Activated CD4-positive, alpha-beta T cell treated with anti-CD3 and anti-CD28 coated beads for 36 hours (primary cell): ENCODE measurements at regions of chr1 and their contacts with region 1.

Region 1: DNA sequence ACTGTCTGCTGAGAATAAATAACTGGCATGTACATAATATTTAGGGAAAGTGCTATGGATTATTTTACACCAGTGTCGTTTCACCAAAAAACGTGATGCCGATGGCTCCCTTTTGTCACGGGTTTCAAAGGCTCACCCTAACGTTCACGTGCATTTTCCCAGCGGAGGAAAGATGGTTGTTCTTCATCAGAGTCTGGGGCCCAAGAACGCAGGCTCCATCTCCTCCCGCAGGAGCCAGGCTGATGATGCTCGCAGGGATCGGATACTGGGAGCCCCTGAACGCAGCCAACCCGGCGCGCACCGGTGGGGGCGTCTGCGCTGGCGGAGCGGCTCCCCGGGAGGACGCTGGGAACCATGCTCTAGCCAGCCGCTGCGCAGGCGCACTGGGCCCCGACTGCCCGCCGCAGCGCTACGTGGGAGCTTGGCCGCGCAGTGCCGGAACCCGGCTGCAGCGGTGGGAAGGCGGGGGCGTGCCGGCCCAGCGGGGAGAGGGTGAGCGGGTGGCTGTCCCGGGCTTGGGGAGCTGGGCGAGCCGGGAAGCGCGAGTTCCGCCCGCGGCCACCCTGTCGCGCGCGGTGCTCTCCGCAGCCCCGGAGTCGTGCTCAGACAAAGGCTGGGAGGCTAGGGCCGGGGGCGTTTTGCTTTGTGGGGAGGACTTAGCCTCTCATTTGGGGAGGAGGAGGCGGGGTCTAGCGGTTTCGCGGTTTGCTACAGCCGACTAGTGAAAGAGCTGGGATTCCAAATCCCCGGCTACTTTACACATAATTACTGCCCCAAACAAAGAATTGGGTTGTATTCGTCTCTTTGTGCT is at the start of gene ZFP69B:
- DNase-seq: peak; percentile 96
- ATAC-seq: peak; percentile 67
- H3K4me3 Mint-ChIP-seq: peak within 1 kb of the TSS; percentile 71
- H3K27ac Mint-ChIP-seq: peak within 1 kb of the TSS; percentile 97
- H3K4me1 Mint-ChIP-seq: peaks cover 30% of the 10 kb centered on the region
- H3K27me3 Mint-ChIP-seq: no peaks in the 10 kb centered on the region
- total RNA-seq, gene ZFP69B: 4.6 to 5.3 TPM

Region 2: DNA sequence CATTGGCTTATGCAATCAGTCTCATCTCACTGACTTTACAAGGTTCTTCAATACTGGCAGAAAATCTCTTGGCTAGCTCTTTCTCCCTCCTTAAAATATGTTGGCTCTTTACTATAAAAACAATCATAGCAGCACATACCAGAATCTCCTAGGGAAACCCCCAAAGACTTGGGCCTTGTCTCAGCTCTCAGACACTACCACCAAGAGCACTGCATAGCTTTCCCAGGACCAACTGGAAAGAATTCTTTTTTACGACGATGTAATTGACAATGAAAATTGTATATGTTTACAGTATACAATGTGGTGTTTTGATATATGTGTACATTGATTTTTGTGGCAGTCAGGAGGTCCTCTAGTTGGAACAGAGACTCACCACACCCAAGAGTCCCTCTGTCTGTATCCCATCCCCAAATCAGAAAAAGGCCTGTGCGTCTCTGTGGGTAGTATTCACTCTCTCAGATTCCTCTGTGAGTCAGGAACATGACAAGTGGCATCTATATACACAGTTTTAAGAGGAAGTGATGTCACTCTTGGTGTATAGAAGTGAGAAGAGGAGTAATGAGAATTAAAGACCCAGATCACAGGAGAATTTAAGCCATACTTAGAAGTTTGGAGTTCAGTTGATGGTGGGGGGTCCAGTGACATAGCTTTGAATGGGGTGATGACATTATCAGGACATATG is 55.3 kb before region 1 on chr1:
- CTCF ChIA-PET with region 1: no interaction called
- POLR2A ChIA-PET with region 1: interaction called, 5 read pairs
- intact Hi-C with region 1: loop called in 1 of 2 experiments (anchors 2 kb)
- DNase-seq: peak; percentile 65
- ATAC-seq: peak; percentile 93
- H3K4me3 Mint-ChIP-seq: peak overlapping the region; percentile 55
- H3K27ac Mint-ChIP-seq: peak overlapping the region; percentile 95
- H3K4me1 Mint-ChIP-seq: peaks cover 91% of the 10 kb centered on the region
- H3K27me3 Mint-ChIP-seq: no peaks in the 10 kb centered on the region

Region 3: DNA sequence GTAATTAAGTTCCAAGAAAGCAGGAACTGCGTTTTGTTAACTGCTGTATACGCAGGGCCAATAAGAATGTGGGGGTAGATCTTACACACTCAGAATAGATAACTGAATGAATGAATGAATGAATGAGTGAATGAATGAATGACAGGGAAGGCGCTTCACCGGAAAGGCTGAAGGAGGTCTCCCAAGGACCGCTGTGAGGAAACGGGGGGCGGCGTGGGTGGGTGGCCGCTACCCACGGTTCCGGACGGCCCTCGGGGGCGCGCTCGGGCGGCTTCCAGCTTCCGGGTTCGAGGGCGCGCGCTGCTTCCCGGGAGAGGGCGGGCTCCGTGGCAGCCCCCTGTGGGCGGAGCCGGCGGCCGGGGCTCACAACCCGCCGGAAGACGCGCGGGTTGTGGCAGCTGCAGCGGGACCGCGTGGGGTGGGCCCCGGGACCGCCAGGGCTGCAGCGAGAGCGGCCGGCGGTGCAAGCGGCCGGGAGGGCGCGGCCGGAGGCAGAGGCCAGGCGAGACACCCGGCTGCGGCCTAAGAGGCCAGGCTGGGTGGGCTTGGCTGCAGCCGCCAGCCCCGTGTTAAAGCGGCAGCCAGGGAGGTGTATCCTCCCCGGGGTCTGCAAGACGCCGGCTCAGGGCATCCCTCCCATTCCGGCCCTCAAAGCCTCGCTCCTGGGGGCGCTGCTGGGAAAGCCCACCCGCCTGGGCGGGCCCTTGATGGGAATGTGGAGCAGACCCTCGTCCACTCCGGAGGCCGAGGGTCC is 27.2 kb after region 1 on chr1 and contains the start of gene ZFP69:
- CTCF ChIA-PET with region 1: interaction called, 3 read pairs
- POLR2A ChIA-PET with region 1: no interaction called
- intact Hi-C with region 1: loop called (anchors 1 to 2 kb)
- DNase-seq: peak; percentile 81
- ATAC-seq: peak; percentile 84
- H3K4me3 Mint-ChIP-seq: peak within 1 kb of the TSS; percentile 80
- H3K27ac Mint-ChIP-seq: peak within 1 kb of the TSS; percentile 81
- H3K4me1 Mint-ChIP-seq: peaks cover 21% of the 10 kb centered on the region
- H3K27me3 Mint-ChIP-seq: no peaks in the 10 kb centered on the region
- total RNA-seq, gene ZFP69: 4.6 to 5.4 TPM

Region 4: GRCh38 chr1:40508375-40509341 is 58.8 kb after region 1 on chr1 and contains the start of gene EXO5:
- CTCF ChIA-PET with region 1: interaction called, 5 read pairs
- POLR2A ChIA-PET with region 1: interaction called, 4 read pairs
- intact Hi-C with region 1: loop called (anchors 1 kb)
- DNase-seq: peak; percentile 94
- ATAC-seq: peak; percentile 99
- H3K4me3 Mint-ChIP-seq: peak within 1 kb of the TSS; percentile 75
- H3K27ac Mint-ChIP-seq: peak within 1 kb of the TSS; percentile 88
- H3K4me1 Mint-ChIP-seq: peaks cover 14% of the 10 kb centered on the region
- H3K27me3 Mint-ChIP-seq: no peaks in the 10 kb centered on the region
- total RNA-seq, gene EXO5: 9.5 to 11.9 TPM

Region 5: GRCh38 chr1:40531381-40532061 is 81.6 kb after region 1 on chr1 and contains the start of gene ZNF684:
- CTCF ChIA-PET with region 1: interaction called, 8 read pairs
- POLR2A ChIA-PET with region 1: interaction called, 4 read pairs
- intact Hi-C with region 1: loop called (anchors 1 to 2 kb)
- DNase-seq: peak; percentile 91
- ATAC-seq: peak; percentile 98
- H3K4me3 Mint-ChIP-seq: peak within 1 kb of the TSS; percentile 88
- H3K27ac Mint-ChIP-seq: peak within 1 kb of the TSS; percentile 83
- H3K4me1 Mint-ChIP-seq: peaks cover 17% of the 10 kb centered on the region
- H3K27me3 Mint-ChIP-seq: peaks cover 6% of the 10 kb centered on the region
- total RNA-seq, gene ZNF684: 4.5 to 6.6 TPM